CD8-positive, alpha-beta T cell (primary cell): ENCODE measurements at regions of chr18 and their contacts with region 1.

Region 1: DNA sequence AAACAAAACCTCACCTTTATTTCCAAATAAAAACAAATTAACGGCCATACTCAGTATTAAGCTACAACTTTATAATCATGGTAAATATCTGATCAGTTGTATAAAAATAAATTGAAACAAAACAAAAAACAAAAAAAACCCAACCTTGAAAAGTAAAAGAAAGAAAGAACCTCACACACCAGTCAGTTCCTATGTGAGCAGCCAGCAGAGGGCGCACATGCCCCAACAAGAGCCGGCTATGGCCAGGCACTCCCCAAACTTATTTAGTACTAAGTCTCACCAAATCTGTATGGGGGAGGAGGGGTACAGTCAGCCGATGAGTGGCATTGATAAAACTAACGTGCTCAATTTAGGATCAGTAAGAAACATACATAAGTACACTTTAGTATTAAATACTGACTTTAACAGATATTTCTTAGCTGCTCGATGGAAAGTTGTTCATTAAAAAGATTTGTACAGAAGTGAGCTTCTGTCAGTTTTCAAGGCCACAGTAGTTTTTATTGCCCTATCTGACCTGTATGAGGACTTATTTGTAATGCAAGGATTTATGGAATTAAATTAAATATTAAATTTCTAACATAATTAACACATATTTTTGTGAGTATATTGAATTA is 172.6 kb downstream of the TCF4 start:
- DNase-seq: peak; percentile 25 to 78 (median 69)
- ATAC-seq: peak; percentile 40
- H3K4me3 ChIP-seq: no peak overlapping the region
- H3K4me3 Mint-ChIP-seq: no peak overlapping the region
- H3K27ac ChIP-seq: no peak overlapping the region
- H3K27ac Mint-ChIP-seq: no peak overlapping the region
- H3K4me1 ChIP-seq: no peaks in the 10 kb centered on the region
- H3K4me1 Mint-ChIP-seq: peaks cover 2% of the 10 kb centered on the region
- H3K27me3 ChIP-seq: no peaks in the 10 kb centered on the region
- H3K27me3 Mint-ChIP-seq: peaks cover 2% of the 10 kb centered on the region
- CTCF ChIP-seq: peak; percentile 86

Region 2: DNA sequence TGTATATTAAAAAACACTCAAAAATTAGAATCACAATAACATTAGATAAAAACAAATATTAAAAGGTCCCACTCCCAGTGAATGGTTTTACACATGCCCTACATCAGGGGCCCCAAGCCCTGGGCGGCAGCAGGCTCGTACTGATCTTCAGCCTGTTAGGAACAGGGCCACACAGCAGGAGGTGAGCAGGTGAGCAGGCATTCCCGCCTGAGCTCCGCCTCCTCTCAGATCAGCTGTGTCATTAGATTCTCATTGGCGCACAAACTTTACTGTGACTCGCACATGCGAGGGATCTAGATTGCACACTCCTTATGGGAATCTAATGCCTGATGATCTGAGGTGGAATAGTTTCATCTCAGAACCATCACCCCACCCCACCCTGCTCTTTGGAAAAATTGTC is 1265.1 kb before region 1 on chr18:
- CTCF ChIA-PET with region 1: no interaction called
- POLR2A ChIA-PET with region 1: no interaction called
- intact Hi-C with region 1: no loop called
- DNase-seq: no peak
- ATAC-seq: no peak
- H3K4me3 ChIP-seq: no peak overlapping the region
- H3K4me3 Mint-ChIP-seq: no peak overlapping the region
- H3K27ac ChIP-seq: no peak overlapping the region
- H3K27ac Mint-ChIP-seq: no peak overlapping the region
- H3K4me1 ChIP-seq: no peaks in the 10 kb centered on the region
- H3K4me1 Mint-ChIP-seq: no peaks in the 10 kb centered on the region
- H3K27me3 ChIP-seq: no peaks in the 10 kb centered on the region
- H3K27me3 Mint-ChIP-seq: no peaks in the 10 kb centered on the region
- CTCF ChIP-seq: no peak

Region 3: DNA sequence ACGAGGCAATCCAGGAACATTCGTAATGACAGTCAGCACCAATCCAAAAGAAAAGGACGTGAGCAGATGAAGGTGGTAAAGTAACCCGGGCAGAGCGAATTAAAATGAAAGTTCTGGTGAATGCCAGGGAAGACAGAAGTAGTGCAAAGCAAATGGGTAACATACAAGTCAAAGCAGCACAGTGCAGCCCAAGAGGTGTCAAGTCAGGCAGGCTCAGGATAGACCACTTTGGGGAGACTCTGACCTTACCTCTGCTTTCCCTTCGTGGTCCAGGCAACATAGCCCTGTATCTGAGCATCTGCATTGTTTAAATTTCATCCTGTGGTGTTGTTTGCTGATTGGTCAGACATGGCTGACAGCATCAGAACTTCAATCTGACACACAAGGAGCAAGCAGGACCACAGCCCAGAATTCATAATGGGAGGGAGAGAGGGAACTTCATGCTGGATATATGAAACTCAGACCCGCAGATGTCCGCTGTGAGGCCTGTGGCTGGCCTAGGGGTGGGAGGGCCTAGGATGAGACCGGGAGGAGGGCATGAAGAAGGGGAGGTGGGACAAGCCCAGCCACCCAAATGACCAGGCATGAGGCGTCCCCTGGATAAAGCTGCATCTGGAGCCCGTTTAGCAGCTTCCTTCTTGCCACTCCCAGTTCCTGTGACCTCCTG is 113.1 kb before region 1 on chr18:
- CTCF ChIA-PET with region 1: no interaction called
- POLR2A ChIA-PET with region 1: no interaction called
- intact Hi-C with region 1: no loop called
- DNase-seq: no peak
- ATAC-seq: no peak
- H3K4me3 ChIP-seq: no peak overlapping the region
- H3K4me3 Mint-ChIP-seq: no peak overlapping the region
- H3K27ac ChIP-seq: no peak overlapping the region
- H3K27ac Mint-ChIP-seq: no peak overlapping the region
- H3K4me1 ChIP-seq: no peaks in the 10 kb centered on the region
- H3K4me1 Mint-ChIP-seq: no peaks in the 10 kb centered on the region
- H3K27me3 ChIP-seq: no peaks in the 10 kb centered on the region
- H3K27me3 Mint-ChIP-seq: no peaks in the 10 kb centered on the region
- CTCF ChIP-seq: no peak

Region 4: GRCh38 chr18:55425698-55426097 is 10.3 kb after region 1 on chr18:
- CTCF ChIA-PET with region 1: interaction called, 12 read pairs
- POLR2A ChIA-PET with region 1: no interaction called
- intact Hi-C with region 1: no loop called
- DNase-seq: no peak
- ATAC-seq: no peak
- H3K4me3 ChIP-seq: no peak overlapping the region
- H3K4me3 Mint-ChIP-seq: no peak overlapping the region
- H3K27ac ChIP-seq: no peak overlapping the region
- H3K27ac Mint-ChIP-seq: no peak overlapping the region
- H3K4me1 ChIP-seq: no peaks in the 10 kb centered on the region
- H3K4me1 Mint-ChIP-seq: no peaks in the 10 kb centered on the region
- H3K27me3 ChIP-seq: no peaks in the 10 kb centered on the region
- H3K27me3 Mint-ChIP-seq: peaks cover 2% of the 10 kb centered on the region
- CTCF ChIP-seq: no peak

Region 5: GRCh38 chr18:55781481-55781957 is 366.2 kb after region 1 on chr18:
- CTCF ChIA-PET with region 1: no interaction called
- POLR2A ChIA-PET with region 1: no interaction called
- intact Hi-C with region 1: loop called in 1 of 2 experiments (anchors 5 kb)
- DNase-seq: no peak
- ATAC-seq: no peak
- H3K4me3 ChIP-seq: no peak overlapping the region
- H3K4me3 Mint-ChIP-seq: no peak overlapping the region
- H3K27ac ChIP-seq: no peak overlapping the region
- H3K27ac Mint-ChIP-seq: no peak overlapping the region
- H3K4me1 ChIP-seq: no peaks in the 10 kb centered on the region
- H3K4me1 Mint-ChIP-seq: peaks cover 17% of the 10 kb centered on the region
- H3K27me3 ChIP-seq: peaks cover 3 to 4% of the 10 kb centered on the region in 2 experiments
- H3K27me3 Mint-ChIP-seq: peaks cover 49% of the 10 kb centered on the region
- CTCF ChIP-seq: no peak

Region 6: GRCh38 chr18:56374007-56374655 is 958.8 kb after region 1 on chr18:
- CTCF ChIA-PET with region 1: no interaction called
- POLR2A ChIA-PET with region 1: no interaction called
- intact Hi-C with region 1: loop called in 1 of 2 experiments (anchors 5 kb)
- DNase-seq: no peak
- ATAC-seq: no peak
- H3K4me3 ChIP-seq: no peak overlapping the region
- H3K4me3 Mint-ChIP-seq: no peak overlapping the region
- H3K27ac ChIP-seq: no peak overlapping the region
- H3K27ac Mint-ChIP-seq: no peak overlapping the region
- H3K4me1 ChIP-seq: no peaks in the 10 kb centered on the region
- H3K4me1 Mint-ChIP-seq: no peaks in the 10 kb centered on the region
- H3K27me3 ChIP-seq: no peaks in the 10 kb centered on the region
- H3K27me3 Mint-ChIP-seq: no peaks in the 10 kb centered on the region
- CTCF ChIP-seq: no peak

Region 7: DNA sequence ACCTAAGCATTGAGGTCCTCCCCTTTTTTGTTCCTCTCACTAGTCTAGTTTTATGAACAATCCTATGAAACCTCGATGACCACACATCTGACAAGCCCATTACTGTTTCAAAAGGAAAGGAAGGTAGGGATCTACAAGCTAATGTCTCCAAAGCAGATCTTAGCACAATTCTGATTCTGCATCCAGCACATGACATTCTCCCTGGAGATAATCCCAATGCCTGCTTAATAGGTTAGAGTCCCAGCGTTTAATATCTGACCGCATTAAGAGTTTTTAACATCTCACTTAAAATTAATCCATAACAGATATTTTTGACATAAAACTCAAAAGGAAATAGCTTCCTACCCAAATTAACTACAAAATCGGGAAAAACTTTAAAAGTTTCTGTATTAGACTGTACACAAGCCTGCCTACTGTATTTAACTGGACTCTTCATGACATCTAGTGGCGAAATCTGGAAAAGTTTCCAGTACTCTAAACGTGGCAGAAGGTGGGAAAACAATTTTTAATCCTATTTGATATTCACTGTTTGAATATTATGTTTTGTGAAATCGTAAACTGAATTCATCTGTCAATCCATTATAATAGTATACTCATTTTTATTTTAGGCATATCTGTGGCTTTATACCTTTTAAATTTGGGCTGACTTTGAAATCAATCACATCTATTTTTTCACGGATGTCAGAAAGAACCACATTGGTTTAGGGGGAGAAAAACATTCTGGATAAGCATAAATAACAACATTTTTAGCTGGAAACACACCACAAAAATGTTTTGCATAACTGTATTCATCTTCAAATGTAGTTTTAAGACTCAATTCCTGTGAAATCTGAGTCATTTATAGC is 1160.7 kb after region 1 on chr18:
- CTCF ChIA-PET with region 1: interaction called, 6 read pairs
- POLR2A ChIA-PET with region 1: no interaction called
- intact Hi-C with region 1: loop called in 1 of 2 experiments (anchors 1 kb)
- DNase-seq: peak in 2 of 9 experiments; percentile 16 to 48
- ATAC-seq: no peak
- H3K4me3 ChIP-seq: no peak overlapping the region
- H3K4me3 Mint-ChIP-seq: no peak overlapping the region
- H3K27ac ChIP-seq: no peak overlapping the region
- H3K27ac Mint-ChIP-seq: no peak overlapping the region
- H3K4me1 ChIP-seq: no peaks in the 10 kb centered on the region
- H3K4me1 Mint-ChIP-seq: no peaks in the 10 kb centered on the region
- H3K27me3 ChIP-seq: no peaks in the 10 kb centered on the region
- H3K27me3 Mint-ChIP-seq: peaks cover 18% of the 10 kb centered on the region
- CTCF ChIP-seq: peak; percentile 39

Region 8: DNA sequence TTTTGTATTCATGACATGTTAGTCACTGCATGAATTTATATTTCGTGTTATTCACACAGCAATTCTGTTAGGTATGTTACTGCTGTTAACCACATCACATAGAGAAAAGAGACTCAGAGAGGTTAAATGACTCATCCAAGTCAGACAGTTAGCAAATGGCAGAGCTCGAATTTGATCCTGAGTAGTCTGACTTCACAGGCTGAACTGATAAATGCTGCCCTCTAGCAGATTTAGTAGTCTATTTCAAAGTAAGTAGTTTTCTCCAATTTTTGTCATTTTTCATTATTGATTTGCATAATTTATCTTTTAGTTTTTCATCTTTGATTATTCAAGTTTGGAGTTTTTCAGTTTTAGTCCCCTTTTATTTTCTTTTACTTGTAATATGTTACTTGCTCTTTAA is 1294.1 kb after region 1 on chr18:
- CTCF ChIA-PET with region 1: no interaction called
- POLR2A ChIA-PET with region 1: no interaction called
- intact Hi-C with region 1: loop called in 1 of 2 experiments (anchors 2 kb)
- DNase-seq: peak in 7 of 9 experiments; percentile 2 to 77 (median 34)
- ATAC-seq: peak; percentile 100
- H3K4me3 ChIP-seq: no peak overlapping the region
- H3K4me3 Mint-ChIP-seq: no peak overlapping the region
- H3K27ac ChIP-seq: no peak overlapping the region
- H3K27ac Mint-ChIP-seq: no peak overlapping the region
- H3K4me1 ChIP-seq: no peaks in the 10 kb centered on the region
- H3K4me1 Mint-ChIP-seq: peaks cover 5% of the 10 kb centered on the region
- H3K27me3 ChIP-seq: no peaks in the 10 kb centered on the region
- H3K27me3 Mint-ChIP-seq: no peaks in the 10 kb centered on the region
- CTCF ChIP-seq: peak; percentile 58

Region 9: DNA sequence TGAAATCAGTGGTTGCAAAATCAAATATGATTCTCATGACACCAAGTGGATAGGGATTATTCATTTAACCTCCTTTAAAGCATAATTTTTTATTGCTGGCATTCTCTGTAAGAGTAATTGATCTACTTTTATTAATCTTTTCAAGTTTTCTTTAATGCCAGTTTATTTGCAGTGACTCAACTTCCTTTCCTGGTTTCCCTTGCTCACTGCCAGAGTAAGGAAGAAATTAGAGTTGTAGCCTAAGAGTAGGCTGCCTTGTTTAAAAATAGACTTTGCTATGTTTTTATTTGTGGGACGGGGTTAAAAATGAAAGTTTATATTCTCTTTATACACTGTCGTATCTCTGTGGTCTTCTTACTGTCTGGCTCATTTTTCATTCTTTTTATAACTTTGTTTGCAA is 1384.4 kb after region 1 on chr18:
- CTCF ChIA-PET with region 1: no interaction called
- POLR2A ChIA-PET with region 1: no interaction called
- intact Hi-C with region 1: no loop called
- DNase-seq: no peak
- ATAC-seq: no peak
- H3K4me3 ChIP-seq: no peak overlapping the region
- H3K4me3 Mint-ChIP-seq: no peak overlapping the region
- H3K27ac ChIP-seq: no peak overlapping the region
- H3K27ac Mint-ChIP-seq: no peak overlapping the region
- H3K4me1 ChIP-seq: no peaks in the 10 kb centered on the region
- H3K4me1 Mint-ChIP-seq: no peaks in the 10 kb centered on the region
- H3K27me3 ChIP-seq: no peaks in the 10 kb centered on the region
- H3K27me3 Mint-ChIP-seq: no peaks in the 10 kb centered on the region
- CTCF ChIP-seq: no peak